Activated naive CD4-positive, alpha-beta T cell treated with anti-CD3 and anti-CD28 coated beads for 36 hours (primary cell): ENCODE measurements at regions of chr13 and their contacts with region 1.

Region 1: DNA sequence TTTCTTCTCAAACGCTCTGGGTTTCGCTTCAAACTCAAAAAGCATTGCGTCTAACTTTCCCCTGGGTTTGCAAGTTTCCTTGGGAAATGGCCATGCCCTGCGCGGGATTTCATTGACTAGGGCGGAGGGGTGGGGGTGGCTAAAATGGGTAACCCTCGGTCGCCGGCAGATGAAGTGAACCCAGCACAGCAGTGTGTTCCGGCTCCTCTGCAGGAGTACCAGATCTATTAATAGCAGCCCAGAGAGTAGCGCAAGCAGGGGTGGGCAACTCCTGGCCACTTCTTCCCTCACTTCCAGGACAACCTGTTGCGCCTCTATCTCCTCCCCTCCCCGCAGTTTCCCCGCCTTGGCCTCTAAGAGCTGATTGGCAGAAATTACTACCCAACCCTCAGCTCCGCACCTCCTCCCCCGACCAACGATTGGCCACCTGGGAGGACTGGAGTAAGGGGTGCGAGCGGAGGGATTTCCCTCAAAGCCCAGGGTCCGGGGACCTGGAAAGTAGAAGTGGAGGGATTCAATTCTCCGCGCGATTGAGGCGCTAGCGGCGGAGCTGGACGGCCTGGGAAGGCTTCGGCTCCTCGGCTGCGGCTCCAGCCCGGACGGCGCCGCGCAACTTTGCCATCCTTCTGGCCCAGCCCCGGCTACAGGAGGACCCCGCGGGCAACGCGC is at the start of gene FREM2:
- DNase-seq: no peak
- H3K4me3 Mint-ChIP-seq: peak within 1 kb of the TSS; percentile 29
- H3K27ac Mint-ChIP-seq: no peak within 1 kb of the TSS
- H3K4me1 Mint-ChIP-seq: peaks cover 5% of the 10 kb centered on the region
- H3K27me3 Mint-ChIP-seq: peaks cover 20% of the 10 kb centered on the region
- total RNA-seq, gene FREM2: not detected

Region 2: GRCh38 chr13:38752653-38753052 is 65.9 kb after region 1 on chr13:
- CTCF ChIA-PET with region 1: no interaction called
- intact Hi-C with region 1: no loop called
- DNase-seq: no peak
- H3K4me3 Mint-ChIP-seq: no peak overlapping the region
- H3K27ac Mint-ChIP-seq: no peak overlapping the region
- H3K4me1 Mint-ChIP-seq: no peaks in the 10 kb centered on the region
- H3K27me3 Mint-ChIP-seq: peaks cover 13% of the 10 kb centered on the region

Region 3: DNA sequence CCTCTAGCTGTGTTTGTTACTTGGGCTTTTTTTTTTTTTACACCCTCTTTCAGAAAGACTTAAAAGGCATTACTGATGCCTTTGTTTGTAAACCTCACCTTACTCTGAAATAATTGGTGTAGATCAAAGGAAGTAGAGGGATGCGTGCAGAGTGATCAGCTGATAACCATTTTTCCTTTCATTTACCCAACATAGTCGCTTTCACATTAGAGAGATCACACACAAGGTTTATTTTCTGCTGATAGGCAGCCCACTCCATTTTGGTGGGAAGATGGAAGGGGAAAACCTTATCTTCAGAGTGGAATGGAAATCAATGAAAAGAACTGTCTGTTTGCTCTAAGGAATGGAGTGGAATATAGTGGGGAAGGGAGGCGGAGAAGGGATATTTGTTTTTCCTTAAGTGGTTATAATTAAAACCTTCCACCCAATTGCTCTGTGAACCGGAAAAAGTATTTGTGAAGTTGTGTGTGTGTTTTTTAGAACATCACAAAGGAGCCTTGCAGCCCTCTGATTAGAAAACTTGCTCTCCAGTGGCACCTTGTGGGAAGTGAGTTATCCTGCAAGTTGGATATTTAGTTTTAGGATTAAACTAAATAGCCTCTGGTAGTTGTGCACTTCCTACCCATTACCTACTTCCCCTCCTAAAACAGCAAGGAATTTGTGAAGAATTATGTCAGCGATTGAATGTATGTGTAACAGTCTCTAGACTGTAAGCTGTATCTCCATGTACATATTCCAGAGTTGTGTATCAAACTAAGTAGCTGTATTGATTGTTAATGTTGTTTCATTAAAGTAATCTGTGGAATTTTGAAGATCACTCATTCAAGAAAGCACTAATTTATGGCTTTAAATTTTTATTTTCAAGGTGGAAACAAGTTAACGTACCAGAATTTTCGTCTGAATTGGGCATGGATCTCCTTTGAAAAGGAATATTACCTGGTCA is 77.0 kb after region 1 on chr13:
- CTCF ChIA-PET with region 1: no interaction called
- intact Hi-C with region 1: loop called (anchors 2 kb)
- DNase-seq: peak; percentile 8
- H3K4me3 Mint-ChIP-seq: no peak overlapping the region
- H3K27ac Mint-ChIP-seq: no peak overlapping the region
- H3K4me1 Mint-ChIP-seq: no peaks in the 10 kb centered on the region
- H3K27me3 Mint-ChIP-seq: no peaks in the 10 kb centered on the region

Region 4: DNA sequence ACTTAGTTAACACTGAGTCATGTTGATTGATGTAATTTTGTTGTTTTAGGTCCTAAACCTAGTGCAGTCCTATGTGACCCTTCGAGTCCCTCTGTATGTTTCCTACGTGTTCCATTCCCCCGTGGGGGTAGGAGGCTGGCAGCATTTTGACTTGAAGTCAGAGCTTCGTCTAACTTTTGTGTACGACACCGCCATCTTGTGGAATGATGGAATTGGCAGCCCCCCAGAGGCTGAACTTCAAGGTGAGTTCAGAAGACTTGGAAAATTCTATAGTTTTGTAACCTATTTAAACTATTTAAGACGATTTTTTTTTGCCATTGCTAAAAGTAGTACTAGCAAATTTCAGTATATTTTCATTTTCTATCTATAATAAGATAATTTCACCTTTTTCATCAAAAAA is 186.0 kb after region 1 on chr13:
- CTCF ChIA-PET with region 1: no interaction called
- intact Hi-C with region 1: loop called (anchors 1 kb)
- DNase-seq: peak; percentile 66
- H3K4me3 Mint-ChIP-seq: no peak overlapping the region
- H3K27ac Mint-ChIP-seq: no peak overlapping the region
- H3K4me1 Mint-ChIP-seq: no peaks in the 10 kb centered on the region
- H3K27me3 Mint-ChIP-seq: peaks cover 14% of the 10 kb centered on the region

Region 5: DNA sequence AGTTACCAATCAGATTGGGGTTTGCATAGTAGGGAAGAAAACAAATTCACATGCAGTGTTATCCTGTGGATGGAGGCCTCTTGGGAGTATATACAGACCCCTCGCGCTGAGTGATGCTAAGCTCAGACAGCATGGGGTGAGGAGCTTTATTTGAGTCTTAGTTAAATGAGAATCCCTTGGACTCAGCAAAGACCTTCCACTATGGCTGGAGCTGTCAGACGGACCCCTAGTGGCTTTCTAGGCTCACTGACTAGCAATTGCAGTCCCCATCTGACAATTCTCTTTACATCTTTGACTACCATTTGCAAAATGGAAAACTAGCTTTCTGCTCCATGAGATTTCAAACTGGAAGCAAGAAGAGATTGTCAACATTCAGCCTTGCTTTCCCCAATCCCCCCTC is 213.5 kb after region 1 on chr13:
- CTCF ChIA-PET with region 1: no interaction called
- intact Hi-C with region 1: no loop called
- DNase-seq: no peak
- H3K4me3 Mint-ChIP-seq: no peak overlapping the region
- H3K27ac Mint-ChIP-seq: no peak overlapping the region
- H3K4me1 Mint-ChIP-seq: no peaks in the 10 kb centered on the region
- H3K27me3 Mint-ChIP-seq: peaks cover 6% of the 10 kb centered on the region

Region 6: GRCh38 chr13:38914070-38914469 is 227.4 kb after region 1 on chr13:
- CTCF ChIA-PET with region 1: no interaction called
- intact Hi-C with region 1: loop called (anchors 1 kb)
- DNase-seq: no peak
- H3K4me3 Mint-ChIP-seq: no peak overlapping the region
- H3K27ac Mint-ChIP-seq: no peak overlapping the region
- H3K4me1 Mint-ChIP-seq: no peaks in the 10 kb centered on the region
- H3K27me3 Mint-ChIP-seq: peaks cover 11% of the 10 kb centered on the region